Transverse colon (tissue), 4 donors: ENCODE measurements at regions of chr6 and their contacts with region 1.

Region 1: DNA sequence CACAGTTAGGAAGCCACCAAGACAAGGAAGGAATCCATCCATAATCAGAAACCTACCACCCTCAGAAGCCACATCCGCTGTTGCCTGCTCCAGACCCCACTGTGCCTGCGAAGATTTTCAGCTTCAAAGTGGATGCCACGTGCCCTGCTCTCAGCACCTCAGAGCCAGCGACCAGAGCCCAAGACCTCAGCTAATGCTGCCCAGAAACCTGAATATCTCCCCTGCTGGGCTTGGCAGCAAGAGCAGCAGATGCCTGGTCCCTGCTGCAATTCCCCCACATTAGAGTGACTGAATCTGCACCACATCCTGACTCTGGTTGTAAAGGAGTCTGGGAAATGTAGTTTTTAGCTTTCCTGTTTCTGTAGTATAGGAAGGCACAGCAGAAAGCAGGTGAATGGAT is 10.7 kb upstream of the ULBP3 start:
- DNase-seq: no peak
- H3K4me3 ChIP-seq: no peak overlapping the region
- H3K27ac ChIP-seq: no peak overlapping the region
- H3K4me1 ChIP-seq: no peaks in the 10 kb centered on the region
- H3K27me3 ChIP-seq: no peaks in the 10 kb centered on the region
- CTCF ChIP-seq: no peak
- EP300 ChIP-seq: no peak
- POLR2A ChIP-seq: no peak

Region 2: GRCh38 chr6:149990618-149991471 is 88.8 kb before region 1 on chr6:
- in situ Hi-C with region 1: no loop called
- intact Hi-C with region 1: no loop called
- DNase-seq: no peak
- H3K4me3 ChIP-seq: peak overlapping the region in 2 of 4 donors; percentile 15 to 34
- H3K27ac ChIP-seq: no peak overlapping the region
- H3K4me1 ChIP-seq: peaks cover 10 to 21% (median 14%) of the 10 kb centered on the region in 4 donors
- H3K27me3 ChIP-seq: peaks cover 100% of the 10 kb centered on the region
- CTCF ChIP-seq: no peak
- EP300 ChIP-seq: no peak
- POLR2A ChIP-seq: no peak

Region 3: GRCh38 chr6:150119173-150119572 is 39.6 kb after region 1 on chr6:
- in situ Hi-C with region 1: no loop called
- intact Hi-C with region 1: no loop called
- DNase-seq: no peak
- H3K4me3 ChIP-seq: no peak overlapping the region
- H3K27ac ChIP-seq: no peak overlapping the region
- H3K4me1 ChIP-seq: no peaks in the 10 kb centered on the region
- H3K27me3 ChIP-seq: no peaks in the 10 kb centered on the region
- CTCF ChIP-seq: no peak
- EP300 ChIP-seq: no peak
- POLR2A ChIP-seq: no peak

Region 4: GRCh38 chr6:150208611-150209352 is 129.2 kb after region 1 on chr6:
- in situ Hi-C with region 1: no loop called
- intact Hi-C with region 1: no loop called
- DNase-seq: no peak
- H3K4me3 ChIP-seq: no peak overlapping the region
- H3K27ac ChIP-seq: no peak overlapping the region
- H3K4me1 ChIP-seq: peaks cover 0 to 3% (median 0%) of the 10 kb centered on the region in 4 donors
- H3K27me3 ChIP-seq: no peaks in the 10 kb centered on the region
- CTCF ChIP-seq: no peak
- EP300 ChIP-seq: no peak
- POLR2A ChIP-seq: no peak

Region 5: GRCh38 chr6:150334790-150335783 is 255.5 kb after region 1 on chr6:
- in situ Hi-C with region 1: loop called (anchors 5 to 10 kb)
- intact Hi-C with region 1: loop called (anchors 5 kb)
- DNase-seq: peak; percentile 44
- H3K4me3 ChIP-seq: no peak overlapping the region
- H3K27ac ChIP-seq: no peak overlapping the region
- H3K4me1 ChIP-seq: no peaks in the 10 kb centered on the region
- H3K27me3 ChIP-seq: no peaks in the 10 kb centered on the region
- CTCF ChIP-seq: peak; percentile 73 to 87 (median 79)
- EP300 ChIP-seq: no peak
- POLR2A ChIP-seq: no peak

Region 6: GRCh38 chr6:150395398-150396009 is 315.9 kb after region 1 on chr6:
- in situ Hi-C with region 1: loop called in 2 of 4 experiments (anchors 10 kb)
- intact Hi-C with region 1: loop called (anchors 10 kb)
- DNase-seq: peak; percentile 35
- H3K4me3 ChIP-seq: no peak overlapping the region
- H3K27ac ChIP-seq: no peak overlapping the region
- H3K4me1 ChIP-seq: no peaks in the 10 kb centered on the region
- H3K27me3 ChIP-seq: no peaks in the 10 kb centered on the region
- CTCF ChIP-seq: peak; percentile 60 to 73 (median 67)
- EP300 ChIP-seq: no peak
- POLR2A ChIP-seq: no peak